Activated T-helper 2 cell treated with anti-CD3 and anti-CD28 coated beads, Interferon-gamma antibody, Interleukin-2, Interleukin-4, amounts not matched to agents 10 μg/mL and 5 μg/mL and 100 μg/mL, durations not matched to agents 14 hours and 24 hours and 36 hours (primary cell): ENCODE measurements at regions of chr6 and their contacts with region 1.

Region 1: DNA sequence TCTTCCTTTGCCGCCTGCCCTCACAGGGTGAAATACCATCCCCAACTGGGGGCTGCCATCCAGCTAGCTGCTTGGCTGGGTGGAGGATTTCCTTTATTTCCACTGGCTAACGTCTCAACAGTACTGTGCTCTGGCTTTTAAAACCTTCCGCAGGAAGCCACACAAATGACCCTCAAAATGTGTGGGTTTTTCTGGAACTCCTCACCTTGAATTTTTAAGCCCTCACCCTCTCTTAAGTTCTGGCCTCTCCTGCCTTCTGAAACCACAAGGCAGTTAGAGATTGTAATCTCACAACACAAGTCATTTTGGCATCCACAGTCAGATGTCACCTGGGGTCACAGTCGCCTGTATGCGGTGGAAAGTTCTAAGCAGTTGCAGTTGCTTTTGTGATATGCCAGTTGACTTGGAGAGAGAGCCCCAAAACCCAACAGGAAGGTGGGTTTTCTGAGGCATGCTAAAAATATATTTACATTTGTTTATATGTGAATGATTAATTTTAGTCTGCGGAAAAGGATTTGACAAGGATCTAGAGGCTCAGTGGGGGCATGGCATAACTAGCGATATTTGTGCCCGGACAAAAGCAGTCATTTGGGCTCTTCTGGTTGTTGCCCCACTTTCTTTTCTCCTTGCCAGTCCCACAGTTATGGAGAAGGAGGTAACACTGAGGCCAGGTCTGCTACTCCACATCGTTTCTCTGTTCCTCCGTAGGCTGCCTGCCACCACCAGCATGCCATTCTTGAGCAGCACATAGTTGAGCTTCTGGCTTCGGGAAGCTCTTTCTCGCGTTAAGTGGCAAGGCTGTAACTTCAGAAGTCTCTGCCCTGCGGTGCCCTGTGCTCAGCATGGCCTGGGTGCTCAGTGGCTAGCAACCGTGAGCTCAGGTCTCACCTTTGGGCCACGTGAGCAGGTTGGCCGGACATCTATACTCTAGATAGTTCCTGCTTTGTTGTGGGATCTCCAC is 335.3 kb downstream of the CD83 start:
- DNase-seq: peak; percentile 81
- H3K4me3 Mint-ChIP-seq: peak overlapping the region; percentile 63
- H3K27ac Mint-ChIP-seq: peak overlapping the region; percentile 90
- H3K4me1 Mint-ChIP-seq: peaks cover 91% of the 10 kb centered on the region
- H3K27me3 Mint-ChIP-seq: no peaks in the 10 kb centered on the region

Region 2: GRCh38 chr6:14165091-14165490 is 287.8 kb before region 1 on chr6:
- intact Hi-C with region 1: no loop called
- DNase-seq: no peak
- H3K4me3 Mint-ChIP-seq: no peak overlapping the region
- H3K27ac Mint-ChIP-seq: no peak overlapping the region
- H3K4me1 Mint-ChIP-seq: peaks cover 2% of the 10 kb centered on the region
- H3K27me3 Mint-ChIP-seq: no peaks in the 10 kb centered on the region

Region 3: GRCh38 chr6:14228571-14228970 is 224.3 kb before region 1 on chr6:
- intact Hi-C with region 1: no loop called
- DNase-seq: no peak
- H3K4me3 Mint-ChIP-seq: no peak overlapping the region
- H3K27ac Mint-ChIP-seq: no peak overlapping the region
- H3K4me1 Mint-ChIP-seq: peaks cover 20% of the 10 kb centered on the region
- H3K27me3 Mint-ChIP-seq: no peaks in the 10 kb centered on the region

Region 4: GRCh38 chr6:14270925-14271791 is 181.7 kb before region 1 on chr6:
- intact Hi-C with region 1: loop called (anchors 1 kb)
- DNase-seq: peak; percentile 69
- H3K4me3 Mint-ChIP-seq: no peak overlapping the region
- H3K27ac Mint-ChIP-seq: peak overlapping the region; percentile 82
- H3K4me1 Mint-ChIP-seq: peaks cover 58% of the 10 kb centered on the region
- H3K27me3 Mint-ChIP-seq: no peaks in the 10 kb centered on the region

Region 5: GRCh38 chr6:14383451-14383856 is 69.4 kb before region 1 on chr6:
- intact Hi-C with region 1: no loop called
- DNase-seq: no peak
- H3K4me3 Mint-ChIP-seq: no peak overlapping the region
- H3K27ac Mint-ChIP-seq: no peak overlapping the region
- H3K4me1 Mint-ChIP-seq: peaks cover 54% of the 10 kb centered on the region
- H3K27me3 Mint-ChIP-seq: no peaks in the 10 kb centered on the region

Region 6: GRCh38 chr6:14423330-14423729 is 29.5 kb before region 1 on chr6:
- intact Hi-C with region 1: loop called (anchors 1 kb)
- DNase-seq: no peak
- H3K4me3 Mint-ChIP-seq: no peak overlapping the region
- H3K27ac Mint-ChIP-seq: peak overlapping the region; percentile 78
- H3K4me1 Mint-ChIP-seq: peaks cover 42% of the 10 kb centered on the region
- H3K27me3 Mint-ChIP-seq: no peaks in the 10 kb centered on the region

Region 7: DNA sequence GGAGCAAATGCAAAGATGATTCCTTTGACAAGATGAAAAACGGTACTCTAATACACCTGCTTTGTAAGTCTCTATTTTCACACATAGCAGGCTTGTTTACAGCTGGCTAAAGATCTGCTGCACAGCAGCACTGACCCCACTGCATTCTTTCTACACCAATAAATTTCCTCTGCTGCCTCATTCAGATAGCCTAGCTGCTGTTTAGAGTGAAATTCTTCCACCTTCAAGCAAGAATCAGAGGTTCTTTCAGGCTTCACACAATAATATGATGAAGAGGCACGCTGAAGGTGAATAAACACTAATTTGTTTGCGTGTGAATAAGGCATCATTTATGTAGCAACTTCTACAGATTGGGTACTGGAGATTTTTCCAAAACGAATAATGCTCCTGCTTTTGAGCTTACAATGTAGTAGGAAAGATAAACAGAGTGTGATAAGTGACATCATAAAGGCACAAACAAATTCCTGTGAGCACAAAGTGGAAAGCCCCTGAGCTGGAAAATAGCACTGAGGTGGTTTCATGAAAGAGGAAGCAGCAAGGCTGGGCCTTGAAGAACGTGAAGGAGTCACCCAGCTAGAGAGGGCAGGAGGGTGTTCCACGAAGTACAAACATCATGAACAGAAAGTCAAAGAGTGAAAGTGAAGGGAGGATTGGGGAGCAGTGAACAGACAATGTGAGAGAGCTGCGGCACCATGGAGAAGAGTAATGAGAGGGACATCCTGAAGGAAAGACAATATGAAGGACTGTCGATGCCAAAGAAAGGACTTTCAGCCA is 208.1 kb after region 1 on chr6:
- intact Hi-C with region 1: loop called (anchors 1 kb)
- DNase-seq: peak; percentile 52
- H3K4me3 Mint-ChIP-seq: no peak overlapping the region
- H3K27ac Mint-ChIP-seq: no peak overlapping the region
- H3K4me1 Mint-ChIP-seq: peaks cover 35% of the 10 kb centered on the region
- H3K27me3 Mint-ChIP-seq: no peaks in the 10 kb centered on the region

Region 8: GRCh38 chr6:14743465-14744211 is 290.8 kb after region 1 on chr6:
- intact Hi-C with region 1: loop called (anchors 2 kb)
- DNase-seq: peak; percentile 73
- H3K4me3 Mint-ChIP-seq: peak overlapping the region; percentile 61
- H3K27ac Mint-ChIP-seq: peak overlapping the region; percentile 100
- H3K4me1 Mint-ChIP-seq: peaks cover 79% of the 10 kb centered on the region
- H3K27me3 Mint-ChIP-seq: no peaks in the 10 kb centered on the region

Region 9: GRCh38 chr6:15245361-15246216 is 792.7 kb after region 1 on chr6 and contains the start of gene JARID2:
- intact Hi-C with region 1: loop called (anchors 2 kb)
- DNase-seq: peak; percentile 93
- H3K4me3 Mint-ChIP-seq: peak within 1 kb of the TSS; percentile 99
- H3K27ac Mint-ChIP-seq: peak within 1 kb of the TSS; percentile 99
- H3K4me1 Mint-ChIP-seq: peaks cover 30% of the 10 kb centered on the region
- H3K27me3 Mint-ChIP-seq: no peaks in the 10 kb centered on the region
- total RNA-seq, gene JARID2: 55.9 and 57.7 TPM in 2 replicates